Mammary epithelial cell (primary cell): ENCODE measurements at regions of chr5 and their contacts with region 1.

Region 1: DNA sequence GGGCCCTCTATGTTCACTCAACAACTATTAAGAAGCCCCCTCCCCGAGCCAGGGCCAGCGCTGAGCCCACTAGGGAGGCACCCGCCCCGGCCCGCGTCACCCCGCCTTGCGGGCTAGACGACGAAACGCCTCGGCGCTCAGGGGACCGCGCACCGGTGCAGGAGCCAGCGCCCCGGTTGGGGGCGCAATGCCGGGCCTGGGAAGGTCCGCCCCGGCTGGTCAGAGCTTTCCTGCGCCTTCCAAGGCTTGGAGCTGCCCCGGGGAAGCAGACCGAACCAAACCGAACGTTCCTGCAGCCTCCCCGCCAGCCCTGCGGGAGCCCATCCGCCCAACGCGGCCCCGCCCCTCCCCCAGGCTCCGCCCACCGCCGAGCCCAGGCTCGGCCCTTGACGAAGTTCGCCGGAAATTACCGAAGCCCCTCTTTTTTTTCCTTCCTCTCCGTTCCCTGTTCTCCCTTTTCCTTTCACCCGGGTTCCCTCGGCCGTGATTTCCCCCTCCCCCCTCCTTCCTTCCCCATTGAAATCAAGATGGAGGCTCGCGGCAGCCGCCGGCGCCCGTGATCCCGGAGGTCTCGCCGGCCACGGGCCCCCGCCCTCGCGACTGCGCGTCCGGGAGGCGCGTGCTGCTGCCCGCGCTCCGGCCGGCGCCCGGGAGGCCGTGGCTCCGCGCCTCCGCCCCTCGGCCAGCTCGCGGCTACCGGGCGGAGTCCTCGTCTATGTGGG is at the start of gene TRIO:
- DNase-seq: peak; percentile 87
- H3K4me3 ChIP-seq: peak within 1 kb of the TSS; percentile 89 to 91 (median 89)
- H3K27ac ChIP-seq: peak within 1 kb of the TSS; percentile 84
- H3K4me1 ChIP-seq: peaks cover 31% of the 10 kb centered on the region
- H3K27me3 ChIP-seq: no peaks in the 10 kb centered on the region
- CTCF ChIP-seq: peak; percentile 13 to 65
- total RNA-seq, gene TRIO: 160 to 219 TPM

Region 2: GRCh38 chr5:13987843-13988464 is 155.0 kb before region 1 on chr5:
- CTCF ChIA-PET with region 1: no interaction called
- dilution Hi-C with region 1: no loop called
- in situ Hi-C with region 1: loop called in 1 of 2 experiments (anchors 10 kb)
- intact Hi-C with region 1: loop called (anchors 1 kb)
- DNase-seq: peak; percentile 49
- H3K4me3 ChIP-seq: no peak overlapping the region
- H3K27ac ChIP-seq: no peak overlapping the region
- H3K4me1 ChIP-seq: peaks cover 21% of the 10 kb centered on the region
- H3K27me3 ChIP-seq: no peaks in the 10 kb centered on the region
- CTCF ChIP-seq: peak; percentile 86 to 91

Region 3: GRCh38 chr5:14035859-14036440 is 107.0 kb before region 1 on chr5:
- CTCF ChIA-PET with region 1: no interaction called
- dilution Hi-C with region 1: no loop called
- in situ Hi-C with region 1: no loop called
- intact Hi-C with region 1: loop called (anchors 2 kb)
- DNase-seq: peak; percentile 99
- H3K4me3 ChIP-seq: peak overlapping the region in 2 of 3 experiments; percentile 7 to 22
- H3K27ac ChIP-seq: peak overlapping the region; percentile 93
- H3K4me1 ChIP-seq: peaks cover 62% of the 10 kb centered on the region
- H3K27me3 ChIP-seq: no peaks in the 10 kb centered on the region
- CTCF ChIP-seq: no peak

Region 4: GRCh38 chr5:14108170-14108996 is 34.6 kb before region 1 on chr5:
- CTCF ChIA-PET with region 1: no interaction called
- dilution Hi-C with region 1: no loop called
- in situ Hi-C with region 1: loop called in 1 of 2 experiments (anchors 5 kb)
- intact Hi-C with region 1: no loop called
- DNase-seq: no peak
- H3K4me3 ChIP-seq: no peak overlapping the region
- H3K27ac ChIP-seq: peak overlapping the region; percentile 79
- H3K4me1 ChIP-seq: peaks cover 38% of the 10 kb centered on the region
- H3K27me3 ChIP-seq: no peaks in the 10 kb centered on the region
- CTCF ChIP-seq: peak in 1 of 2 donors; percentile 40

Region 5: GRCh38 chr5:14183187-14183939 is 40.4 kb after region 1 on chr5:
- CTCF ChIA-PET with region 1: no interaction called
- dilution Hi-C with region 1: no loop called
- in situ Hi-C with region 1: no loop called
- intact Hi-C with region 1: loop called (anchors 2 kb)
- DNase-seq: no peak
- H3K4me3 ChIP-seq: no peak overlapping the region
- H3K27ac ChIP-seq: peak overlapping the region; percentile 59
- H3K4me1 ChIP-seq: peaks cover 84% of the 10 kb centered on the region
- H3K27me3 ChIP-seq: no peaks in the 10 kb centered on the region
- CTCF ChIP-seq: no peak

Region 6: GRCh38 chr5:14208071-14209021 is 65.4 kb after region 1 on chr5:
- CTCF ChIA-PET with region 1: no interaction called
- dilution Hi-C with region 1: no loop called
- in situ Hi-C with region 1: no loop called
- intact Hi-C with region 1: loop called (anchors 2 kb)
- DNase-seq: peak; percentile 90
- H3K4me3 ChIP-seq: peak overlapping the region in 2 of 3 experiments; percentile 10 to 30
- H3K27ac ChIP-seq: peak overlapping the region; percentile 91
- H3K4me1 ChIP-seq: peaks cover 86% of the 10 kb centered on the region
- H3K27me3 ChIP-seq: no peaks in the 10 kb centered on the region
- CTCF ChIP-seq: no peak

Region 7: DNA sequence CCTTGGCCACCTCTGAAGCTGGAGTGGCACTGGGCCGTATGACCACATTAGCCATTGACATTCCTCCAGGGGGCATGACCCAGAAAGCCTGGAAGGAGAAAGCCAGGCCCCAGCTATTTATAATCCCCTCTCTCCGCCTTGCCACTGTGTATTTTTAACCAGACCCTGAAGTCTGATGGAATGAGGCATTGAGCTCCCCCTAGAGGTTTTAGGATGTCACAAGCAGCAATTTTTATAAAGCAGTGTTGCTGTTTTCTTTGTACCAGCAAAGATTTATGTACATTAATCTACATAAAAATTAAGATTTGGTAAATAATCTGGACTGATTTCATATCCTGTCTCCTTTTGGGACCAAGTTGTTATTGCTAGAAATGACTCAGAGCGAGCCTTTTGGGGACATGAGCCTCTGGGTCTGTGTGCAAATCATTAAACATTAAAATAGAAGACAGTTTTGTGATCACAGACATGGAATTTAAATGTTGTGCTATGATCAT is 127.3 kb after region 1 on chr5:
- CTCF ChIA-PET with region 1: interaction called, 4 read pairs
- dilution Hi-C with region 1: no loop called
- in situ Hi-C with region 1: loop called in 1 of 2 experiments (anchors 10 kb)
- intact Hi-C with region 1: loop called (anchors 1 kb)
- DNase-seq: peak; percentile 43
- H3K4me3 ChIP-seq: no peak overlapping the region
- H3K27ac ChIP-seq: peak overlapping the region; percentile 95
- H3K4me1 ChIP-seq: peaks cover 55% of the 10 kb centered on the region
- H3K27me3 ChIP-seq: no peaks in the 10 kb centered on the region
- CTCF ChIP-seq: peak; percentile 75 to 84

Region 8: GRCh38 chr5:15191012-15191411 is 1048.0 kb after region 1 on chr5:
- CTCF ChIA-PET with region 1: no interaction called
- dilution Hi-C with region 1: no loop called
- in situ Hi-C with region 1: no loop called
- intact Hi-C with region 1: no loop called
- DNase-seq: no peak
- H3K4me3 ChIP-seq: no peak overlapping the region
- H3K27ac ChIP-seq: no peak overlapping the region
- H3K4me1 ChIP-seq: no peaks in the 10 kb centered on the region
- H3K27me3 ChIP-seq: no peaks in the 10 kb centered on the region
- CTCF ChIP-seq: peak in 1 of 2 donors; percentile 10